CD8-positive, alpha-beta T cell (primary cell): ENCODE measurements at regions of chr4 and their contacts with region 1.

Region 1: DNA sequence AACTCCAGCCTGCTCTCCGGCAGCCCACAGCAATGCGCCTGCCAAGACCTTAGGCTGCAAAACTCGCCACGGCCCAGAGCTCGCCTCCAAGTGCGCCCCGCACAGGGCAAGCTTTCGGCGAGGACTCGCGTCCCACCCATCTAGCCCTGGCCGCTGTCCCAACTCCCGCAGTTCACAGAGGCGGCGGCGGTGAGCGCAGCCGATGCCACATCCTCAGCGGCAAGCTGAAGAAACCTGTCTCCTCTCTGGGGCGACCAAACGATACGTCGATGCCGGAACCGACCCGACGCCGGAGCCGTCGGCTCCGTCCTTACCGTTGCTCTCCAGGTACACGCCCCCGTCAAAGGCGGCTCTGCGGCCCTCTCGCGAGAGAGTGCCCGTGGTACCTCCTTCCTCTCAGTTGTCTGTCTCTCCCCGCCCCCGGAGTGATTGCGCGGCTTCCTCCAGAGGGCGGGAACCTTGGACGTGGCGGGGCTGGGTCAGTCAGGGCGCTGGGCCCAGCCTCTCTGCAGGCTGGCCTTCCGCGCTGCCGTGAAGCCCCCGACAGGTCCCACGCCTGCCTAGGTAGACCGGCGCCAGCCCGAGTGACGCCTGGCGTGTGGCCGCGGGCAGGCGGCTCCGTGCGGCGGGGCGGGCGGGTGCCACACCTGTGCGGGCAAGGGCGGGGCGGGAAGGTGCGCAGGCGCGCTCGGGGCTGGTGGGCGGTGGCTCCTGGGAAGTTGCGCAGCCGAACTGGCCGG is 380 bp upstream of the RAB33B start:
- DNase-seq: peak; percentile 92 to 98 (median 96)
- ATAC-seq: peak; percentile 86
- H3K4me3 ChIP-seq: peak overlapping the region; percentile 90 to 91
- H3K4me3 Mint-ChIP-seq: peak overlapping the region; percentile 98
- H3K27ac ChIP-seq: peak overlapping the region; percentile 92 to 96
- H3K27ac Mint-ChIP-seq: peak overlapping the region; percentile 99
- H3K4me1 ChIP-seq: peaks cover 41% of the 10 kb centered on the region
- H3K4me1 Mint-ChIP-seq: peaks cover 65% of the 10 kb centered on the region
- H3K27me3 ChIP-seq: no peaks in the 10 kb centered on the region
- H3K27me3 Mint-ChIP-seq: no peaks in the 10 kb centered on the region
- CTCF ChIP-seq: no peak

Region 2: GRCh38 chr4:139083956-139084803 is 369.4 kb before region 1 on chr4:
- CTCF ChIA-PET with region 1: no interaction called
- POLR2A ChIA-PET with region 1: interaction called, 7 read pairs
- intact Hi-C with region 1: loop called (anchors 1 to 5 kb)
- DNase-seq: peak; percentile 54 to 92 (median 80)
- ATAC-seq: peak; percentile 41
- H3K4me3 ChIP-seq: peak overlapping the region; percentile 80 to 98
- H3K4me3 Mint-ChIP-seq: peak overlapping the region; percentile 87
- H3K27ac ChIP-seq: peak overlapping the region; percentile 93 to 96
- H3K27ac Mint-ChIP-seq: peak overlapping the region; percentile 94
- H3K4me1 ChIP-seq: peaks cover 25% of the 10 kb centered on the region
- H3K4me1 Mint-ChIP-seq: peaks cover 38% of the 10 kb centered on the region
- H3K27me3 ChIP-seq: no peaks in the 10 kb centered on the region
- H3K27me3 Mint-ChIP-seq: no peaks in the 10 kb centered on the region
- CTCF ChIP-seq: peak; percentile 18

Region 3: GRCh38 chr4:139295206-139295941 is 158.2 kb before region 1 on chr4:
- CTCF ChIA-PET with region 1: interaction called, 3 read pairs
- POLR2A ChIA-PET with region 1: interaction called, 6 read pairs
- intact Hi-C with region 1: loop called in 1 of 2 experiments (anchors 2 kb)
- DNase-seq: peak; percentile 94 to 100 (median 99)
- ATAC-seq: peak; percentile 91
- H3K4me3 ChIP-seq: peak overlapping the region; percentile 65 to 91
- H3K4me3 Mint-ChIP-seq: peak overlapping the region; percentile 91
- H3K27ac ChIP-seq: peak overlapping the region; percentile 74 to 87
- H3K27ac Mint-ChIP-seq: peak overlapping the region; percentile 95
- H3K4me1 ChIP-seq: peaks cover 31% of the 10 kb centered on the region
- H3K4me1 Mint-ChIP-seq: peaks cover 37% of the 10 kb centered on the region
- H3K27me3 ChIP-seq: no peaks in the 10 kb centered on the region
- H3K27me3 Mint-ChIP-seq: no peaks in the 10 kb centered on the region
- CTCF ChIP-seq: peak; percentile 77

Region 4: GRCh38 chr4:139416073-139416673 is 37.4 kb before region 1 on chr4:
- CTCF ChIA-PET with region 1: interaction called, 6 read pairs
- POLR2A ChIA-PET with region 1: interaction called, 4 read pairs
- intact Hi-C with region 1: loop called (anchors 1 kb)
- DNase-seq: peak in 3 of 9 experiments; percentile 28 to 73 (median 64)
- ATAC-seq: peak; percentile 58
- H3K4me3 ChIP-seq: no peak overlapping the region
- H3K4me3 Mint-ChIP-seq: no peak overlapping the region
- H3K27ac ChIP-seq: no peak overlapping the region
- H3K27ac Mint-ChIP-seq: no peak overlapping the region
- H3K4me1 ChIP-seq: no peaks in the 10 kb centered on the region
- H3K4me1 Mint-ChIP-seq: peaks cover 12% of the 10 kb centered on the region
- H3K27me3 ChIP-seq: no peaks in the 10 kb centered on the region
- H3K27me3 Mint-ChIP-seq: no peaks in the 10 kb centered on the region
- CTCF ChIP-seq: peak; percentile 81

Region 5: DNA sequence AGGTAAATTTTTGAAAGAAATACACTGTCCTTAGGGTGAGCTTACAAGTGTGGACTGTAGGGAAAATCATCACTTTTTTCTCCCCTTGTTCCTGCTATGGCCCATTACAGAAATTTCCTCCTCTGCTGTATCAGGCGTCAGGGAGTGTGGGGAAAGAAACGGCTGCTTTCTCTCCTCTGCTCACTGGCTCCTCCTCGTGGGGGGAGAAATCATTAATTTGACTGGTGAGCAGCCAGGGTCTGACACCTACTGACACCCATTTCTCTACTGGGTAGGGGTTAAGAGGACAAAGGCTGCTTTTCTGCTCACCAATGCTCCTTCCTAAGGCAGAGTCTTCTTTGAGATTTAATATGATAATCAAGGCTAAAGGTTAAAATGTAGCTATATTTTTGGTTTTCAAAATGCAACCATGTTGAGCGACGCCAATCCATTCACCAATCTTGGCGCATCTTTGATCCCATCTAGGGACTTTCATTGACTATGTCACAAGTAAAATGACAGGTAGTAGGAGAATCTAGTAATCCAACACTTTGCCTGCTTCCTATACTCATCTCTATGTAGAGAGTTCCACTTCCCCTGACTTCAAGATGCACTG is 77.4 kb after region 1 on chr4:
- CTCF ChIA-PET with region 1: no interaction called
- POLR2A ChIA-PET with region 1: no interaction called
- intact Hi-C with region 1: loop called (anchors 2 to 5 kb)
- DNase-seq: peak; percentile 34 to 74 (median 63)
- ATAC-seq: peak; percentile 70
- H3K4me3 ChIP-seq: no peak overlapping the region
- H3K4me3 Mint-ChIP-seq: no peak overlapping the region
- H3K27ac ChIP-seq: no peak overlapping the region
- H3K27ac Mint-ChIP-seq: no peak overlapping the region
- H3K4me1 ChIP-seq: no peaks in the 10 kb centered on the region
- H3K4me1 Mint-ChIP-seq: peaks cover 14% of the 10 kb centered on the region
- H3K27me3 ChIP-seq: no peaks in the 10 kb centered on the region
- H3K27me3 Mint-ChIP-seq: no peaks in the 10 kb centered on the region
- CTCF ChIP-seq: peak; percentile 79

Region 6: GRCh38 chr4:140373328-140374129 is 920.0 kb after region 1 on chr4 and contains the start of gene SCOC:
- CTCF ChIA-PET with region 1: no interaction called
- POLR2A ChIA-PET with region 1: no interaction called
- intact Hi-C with region 1: loop called (anchors 2 to 10 kb)
- DNase-seq: peak; percentile 90 to 98 (median 95)
- ATAC-seq: peak; percentile 94
- H3K4me3 ChIP-seq: peak within 1 kb of the TSS; percentile 85 to 92
- H3K4me3 Mint-ChIP-seq: no peak within 1 kb of the TSS
- H3K27ac ChIP-seq: peak within 1 kb of the TSS; percentile 81 to 85
- H3K27ac Mint-ChIP-seq: peak within 1 kb of the TSS; percentile 76
- H3K4me1 ChIP-seq: peaks cover 20% of the 10 kb centered on the region
- H3K4me1 Mint-ChIP-seq: peaks cover 37% of the 10 kb centered on the region
- H3K27me3 ChIP-seq: no peaks in the 10 kb centered on the region
- H3K27me3 Mint-ChIP-seq: no peaks in the 10 kb centered on the region
- CTCF ChIP-seq: no peak
- total RNA-seq, gene SCOC: 7.1 to 8.3 TPM

Region 7: DNA sequence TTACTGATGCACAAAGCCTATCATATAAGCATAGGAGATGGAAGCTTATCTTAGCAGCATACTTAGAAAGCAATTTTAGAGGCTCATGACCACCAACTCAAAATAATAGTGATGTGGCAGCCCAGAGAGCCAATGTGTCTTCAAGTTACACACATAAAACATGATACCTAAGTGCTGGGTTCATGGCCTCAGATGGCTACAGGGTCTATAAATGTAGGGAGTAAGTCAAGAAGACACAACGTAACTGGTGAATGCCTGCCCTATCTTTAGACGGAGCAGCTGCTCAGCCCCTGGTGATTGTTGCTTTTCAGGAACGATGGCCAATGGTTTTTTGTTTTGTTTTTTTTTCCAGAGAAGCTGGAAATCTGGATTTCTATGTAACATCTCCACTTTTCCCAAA is 1636.9 kb after region 1 on chr4:
- CTCF ChIA-PET with region 1: no interaction called
- POLR2A ChIA-PET with region 1: no interaction called
- intact Hi-C with region 1: no loop called
- DNase-seq: no peak
- ATAC-seq: no peak
- H3K4me3 ChIP-seq: no peak overlapping the region
- H3K4me3 Mint-ChIP-seq: no peak overlapping the region
- H3K27ac ChIP-seq: no peak overlapping the region
- H3K27ac Mint-ChIP-seq: no peak overlapping the region
- H3K4me1 ChIP-seq: no peaks in the 10 kb centered on the region
- H3K4me1 Mint-ChIP-seq: no peaks in the 10 kb centered on the region
- H3K27me3 ChIP-seq: no peaks in the 10 kb centered on the region
- H3K27me3 Mint-ChIP-seq: peaks cover 3% of the 10 kb centered on the region
- CTCF ChIP-seq: no peak